ENCODE measurements at regions of chr4 and their contacts with region 1.

Region 1: GRCh38 chr4:109977854-109978501 is 65.3 kb downstream of the EGF start:
- DNase-seq: no peak
- ATAC-seq: no peak

Region 2: GRCh38 chr4:109424093-109424841 is 553.7 kb before region 1 on chr4:
- intact Hi-C with region 1: loop called (anchors 5 kb)
- DNase-seq: no peak
- ATAC-seq: no peak

Region 3: DNA sequence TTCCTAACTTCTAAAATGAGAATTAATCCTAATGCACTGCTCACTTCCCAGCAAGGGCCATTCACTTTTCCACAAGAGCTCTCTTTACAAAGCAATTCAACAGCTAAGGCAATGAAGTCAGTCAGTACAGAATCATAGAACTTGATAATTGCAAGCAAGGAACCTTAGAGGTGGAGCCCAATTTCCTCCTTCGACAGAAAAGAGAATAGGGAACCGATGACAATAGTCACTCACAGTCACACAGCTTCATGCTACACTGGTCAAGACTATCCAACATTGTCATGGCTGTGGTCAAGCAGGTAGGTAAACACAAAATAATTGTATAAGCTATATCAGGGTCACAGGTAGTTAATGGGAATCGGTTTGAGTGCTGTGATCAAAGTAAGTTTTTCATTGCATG is 130.4 kb after region 1 on chr4:
- intact Hi-C with region 1: no loop called
- DNase-seq: no peak
- ATAC-seq: no peak

Region 4: GRCh38 chr4:110510955-110511544 is 533.1 kb after region 1 on chr4:
- intact Hi-C with region 1: no loop called
- DNase-seq: no peak
- ATAC-seq: peak; percentile 57

Measured in left ventricle myocardium superior (tissue), 1 donor.